ENCODE measurements at regions of chr10 and their contacts with region 1.

Region 1: GRCh38 chr10:91974960-91975359 is 51.4 kb downstream of the BTAF1 start:
- DNase-seq: no peak
- H3K4me3 Mint-ChIP-seq: peak overlapping the region; percentile 55
- H3K27ac Mint-ChIP-seq: peak overlapping the region; percentile 93
- H3K4me1 Mint-ChIP-seq: peaks cover 36% of the 10 kb centered on the region
- H3K27me3 Mint-ChIP-seq: no peaks in the 10 kb centered on the region

Region 2: GRCh38 chr10:91944880-91945630 is 29.9 kb before region 1 on chr10:
- intact Hi-C with region 1: loop called (anchors 1 kb)
- DNase-seq: peak; percentile 73
- H3K4me3 Mint-ChIP-seq: peak overlapping the region; percentile 60
- H3K27ac Mint-ChIP-seq: peak overlapping the region; percentile 84
- H3K4me1 Mint-ChIP-seq: peaks cover 22% of the 10 kb centered on the region
- H3K27me3 Mint-ChIP-seq: no peaks in the 10 kb centered on the region

Region 3: DNA sequence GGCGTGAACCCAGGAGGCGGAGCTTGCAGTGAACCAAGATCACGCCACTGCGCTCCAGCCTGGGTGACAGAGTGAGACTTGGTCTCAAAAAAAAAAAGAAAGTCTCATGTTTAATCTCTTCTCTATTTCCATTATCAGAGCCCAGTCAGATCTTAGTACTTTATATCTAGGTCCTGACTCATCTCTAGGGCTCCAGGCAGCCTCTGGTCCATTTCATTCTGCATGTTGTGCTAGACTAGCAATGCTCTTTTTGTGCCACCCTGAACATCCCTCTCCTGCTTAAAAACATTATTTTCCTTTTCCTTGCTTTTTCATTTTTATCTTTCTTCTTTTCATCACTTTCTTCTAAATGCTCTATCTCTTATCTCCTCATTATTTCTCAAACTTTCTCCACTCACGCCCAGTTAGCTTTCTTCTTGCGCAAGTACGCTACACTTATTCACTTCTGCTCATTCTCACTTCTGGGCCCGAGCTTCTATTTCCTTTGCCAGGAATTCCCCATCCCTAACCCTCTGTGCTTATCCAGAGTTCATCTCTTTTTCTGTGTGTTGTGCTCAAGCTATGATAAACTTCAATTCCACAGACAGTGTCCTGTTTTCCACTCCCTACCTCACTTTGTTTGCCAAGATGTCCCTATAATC is 12.6 kb after region 1 on chr10:
- intact Hi-C with region 1: loop called (anchors 1 kb)
- DNase-seq: no peak
- H3K4me3 Mint-ChIP-seq: no peak overlapping the region
- H3K27ac Mint-ChIP-seq: peak overlapping the region; percentile 5
- H3K4me1 Mint-ChIP-seq: peaks cover 29% of the 10 kb centered on the region
- H3K27me3 Mint-ChIP-seq: no peaks in the 10 kb centered on the region

Region 4: DNA sequence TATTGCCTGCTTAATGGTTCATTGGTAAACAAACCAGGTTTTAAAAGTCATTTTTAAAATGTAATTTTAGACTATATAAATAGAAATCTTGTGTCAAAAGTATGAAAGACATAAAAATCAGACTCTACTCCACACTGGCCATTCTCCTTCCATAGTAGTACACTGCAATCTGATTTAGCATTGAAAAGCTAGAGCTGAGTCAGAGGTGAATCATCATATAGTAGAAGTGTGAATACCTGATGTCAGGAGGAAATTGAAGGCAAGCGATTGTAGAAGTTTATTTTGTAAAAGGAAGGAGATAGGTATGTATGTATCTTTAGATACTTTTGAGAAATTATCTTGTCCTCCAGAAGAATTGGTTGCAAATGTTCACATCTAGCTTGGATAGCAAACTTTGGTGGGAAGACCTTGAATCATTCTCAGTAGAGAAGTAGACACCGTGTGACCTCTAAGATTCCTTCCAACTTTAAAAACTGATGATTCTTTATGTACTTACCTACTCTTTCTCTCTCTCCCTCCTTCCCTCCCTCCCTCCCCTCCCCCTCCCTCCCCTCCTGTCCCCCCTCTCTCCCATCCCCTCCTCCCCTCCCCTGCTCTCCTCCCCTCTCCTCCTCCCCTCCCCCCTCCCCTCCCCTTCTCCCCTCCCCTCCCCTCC is 36.7 kb after region 1 on chr10:
- intact Hi-C with region 1: loop called (anchors 5 kb)
- DNase-seq: no peak
- H3K4me3 Mint-ChIP-seq: no peak overlapping the region
- H3K27ac Mint-ChIP-seq: peak overlapping the region; percentile 2
- H3K4me1 Mint-ChIP-seq: peaks cover 15% of the 10 kb centered on the region
- H3K27me3 Mint-ChIP-seq: no peaks in the 10 kb centered on the region

Region 5: DNA sequence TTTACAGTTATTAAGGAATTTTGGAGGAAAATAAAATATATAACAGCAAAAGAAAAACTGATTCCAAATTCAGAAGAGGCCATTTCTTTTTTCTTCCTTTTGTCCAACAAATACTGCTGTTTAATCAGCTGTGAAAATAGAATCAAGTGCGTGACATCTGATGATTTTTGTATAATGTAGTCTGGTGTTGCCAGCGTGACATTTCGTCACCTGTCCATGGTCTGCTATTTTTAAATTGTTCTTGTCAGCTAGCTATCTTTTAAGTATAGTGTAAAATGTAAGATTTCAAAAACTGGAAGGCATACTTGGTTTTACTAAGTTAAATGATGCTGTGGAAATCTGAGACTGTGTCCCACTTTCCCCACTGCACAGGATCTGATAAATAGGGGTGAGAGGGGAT is 210.0 kb after region 1 on chr10:
- intact Hi-C with region 1: no loop called
- DNase-seq: no peak
- H3K4me3 Mint-ChIP-seq: no peak overlapping the region
- H3K27ac Mint-ChIP-seq: no peak overlapping the region
- H3K4me1 Mint-ChIP-seq: no peaks in the 10 kb centered on the region
- H3K27me3 Mint-ChIP-seq: no peaks in the 10 kb centered on the region

Measured in activated CD4-positive, alpha-beta T cell treated with anti-CD3 and anti-CD28 coated beads, Interleukin-2, amount 10 ng/mL, durations not matched to agents 24 days and 14 days (primary cell).